ENCODE measurements at regions of chr7 and their contacts with region 1.

Region 1: GRCh38 chr7:128398016-128398840 is 11.6 kb downstream of the IMPDH1 start:
- DNase-seq: peak in 2 of 5 donors; percentile 14 to 32
- H3K4me3 ChIP-seq: no peak overlapping the region
- H3K4me3 Mint-ChIP-seq: no peak overlapping the region
- H3K27ac ChIP-seq: no peak overlapping the region
- H3K27ac Mint-ChIP-seq: no peak overlapping the region
- H3K4me1 ChIP-seq: no peaks in the 10 kb centered on the region
- H3K4me1 Mint-ChIP-seq: peaks cover 3 to 10% (median 5%) of the 10 kb centered on the region in 4 donors
- H3K27me3 ChIP-seq: no peaks in the 10 kb centered on the region
- H3K27me3 Mint-ChIP-seq: no peaks in the 10 kb centered on the region

Region 2: DNA sequence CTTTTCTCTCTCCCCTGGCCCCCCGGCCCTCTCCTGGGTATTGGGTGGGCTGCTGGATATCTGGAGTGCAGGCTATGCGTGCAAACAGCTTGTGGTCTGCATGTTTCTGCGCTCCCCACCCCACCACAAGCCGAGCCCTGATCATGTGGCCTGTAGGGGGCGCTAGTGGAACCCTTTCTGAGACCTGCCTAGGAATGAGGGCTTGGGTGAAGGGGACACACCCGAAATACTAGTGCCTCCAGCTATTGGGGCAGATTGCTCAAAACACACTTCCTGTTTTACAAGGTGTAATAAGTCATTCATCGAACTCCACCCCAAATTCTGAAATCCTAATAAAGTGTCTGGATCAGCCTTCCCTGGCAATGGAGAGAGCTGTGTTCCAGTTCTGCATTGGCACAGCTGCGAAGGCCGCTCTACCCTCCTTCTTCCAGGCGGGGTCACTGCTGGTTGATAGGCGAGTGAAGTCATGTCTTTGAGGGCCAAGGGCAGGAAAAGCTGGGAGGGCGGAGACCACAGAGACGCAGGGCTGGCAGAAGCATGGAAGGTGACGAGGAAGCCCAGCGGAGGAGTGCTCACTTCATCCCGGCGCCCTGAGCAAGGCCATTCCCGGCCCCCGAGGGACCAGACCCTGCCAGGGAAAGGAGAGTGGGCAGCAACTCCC is 16.9 kb before region 1 on chr7:
- CTCF ChIA-PET with region 1: interaction called, 21 read pairs
- POLR2A ChIA-PET with region 1: no interaction called
- intact Hi-C with region 1: no loop called
- DNase-seq: no peak
- H3K4me3 ChIP-seq: no peak overlapping the region
- H3K4me3 Mint-ChIP-seq: no peak overlapping the region
- H3K27ac ChIP-seq: no peak overlapping the region
- H3K27ac Mint-ChIP-seq: no peak overlapping the region
- H3K4me1 ChIP-seq: no peaks in the 10 kb centered on the region
- H3K4me1 Mint-ChIP-seq: peaks cover 0 to 2% (median 0%) of the 10 kb centered on the region in 4 donors
- H3K27me3 ChIP-seq: no peaks in the 10 kb centered on the region
- H3K27me3 Mint-ChIP-seq: peaks cover 1 to 2% of the 10 kb centered on the region in 2 donors

Region 3: DNA sequence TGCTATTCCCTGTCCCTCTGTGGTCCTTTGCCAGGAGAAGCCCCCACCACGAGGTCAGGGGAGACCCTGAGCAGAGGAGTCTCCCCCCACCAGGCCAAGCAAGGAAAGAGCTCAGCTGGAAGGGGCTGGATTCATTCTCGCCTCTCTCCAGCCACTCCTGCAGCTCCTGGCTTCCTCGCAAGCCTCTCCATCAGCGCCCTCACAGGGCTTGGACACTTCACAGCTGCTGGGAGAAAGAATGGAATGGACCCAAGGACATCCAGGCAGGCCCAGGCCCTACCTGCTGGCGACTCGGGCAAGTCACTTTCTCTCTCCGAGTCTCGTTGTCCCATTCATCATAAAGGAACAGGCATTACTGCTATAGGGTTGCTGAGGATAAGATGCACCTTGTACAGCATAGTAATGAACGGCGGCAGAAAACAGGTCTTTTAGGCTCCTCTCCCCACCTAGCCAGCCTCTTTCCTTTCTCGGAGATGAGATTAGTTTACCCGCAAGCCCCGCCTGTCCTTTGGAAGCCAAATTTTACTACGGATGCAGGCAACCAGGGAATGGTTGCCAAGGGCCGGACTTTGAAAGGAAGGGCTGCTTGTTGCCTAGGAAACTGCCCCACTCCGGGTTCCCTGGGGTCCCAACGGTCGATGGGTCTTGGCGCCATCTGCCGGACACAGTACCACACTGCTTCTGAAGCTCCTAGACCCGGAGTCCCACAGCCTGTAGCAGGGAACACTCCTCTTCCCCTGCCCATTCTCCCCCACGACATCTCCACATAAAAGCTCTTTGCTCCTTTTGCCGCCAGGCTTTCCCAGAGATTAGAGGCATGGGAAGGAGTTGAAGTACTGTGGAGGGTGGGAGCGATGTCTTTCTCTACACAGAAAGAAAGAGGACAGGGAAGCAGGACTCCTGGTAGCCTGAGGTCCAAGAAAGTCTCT is 10.7 kb before region 1 on chr7:
- CTCF ChIA-PET with region 1: interaction called, 21 read pairs
- POLR2A ChIA-PET with region 1: no interaction called
- intact Hi-C with region 1: no loop called
- DNase-seq: peak in 4 of 5 donors; percentile 48 to 56 (median 51)
- H3K4me3 ChIP-seq: no peak overlapping the region
- H3K4me3 Mint-ChIP-seq: no peak overlapping the region
- H3K27ac ChIP-seq: no peak overlapping the region
- H3K27ac Mint-ChIP-seq: no peak overlapping the region
- H3K4me1 ChIP-seq: no peaks in the 10 kb centered on the region
- H3K4me1 Mint-ChIP-seq: peaks cover 0 to 4% (median under 1%) of the 10 kb centered on the region in 4 donors
- H3K27me3 ChIP-seq: no peaks in the 10 kb centered on the region
- H3K27me3 Mint-ChIP-seq: no peaks in the 10 kb centered on the region

Region 4: GRCh38 chr7:128409596-128410160 is 11.4 kb after region 1 on chr7 and contains the start of gene IMPDH1:
- CTCF ChIA-PET with region 1: interaction called, 80 read pairs
- POLR2A ChIA-PET with region 1: interaction called, 4 read pairs
- intact Hi-C with region 1: no loop called
- DNase-seq: peak; percentile 83 to 91 (median 85)
- H3K4me3 ChIP-seq: peak within 1 kb of the TSS; percentile 68 to 92
- H3K4me3 Mint-ChIP-seq: peak within 1 kb of the TSS; percentile 90 to 96 (median 92)
- H3K27ac ChIP-seq: peak within 1 kb of the TSS; percentile 85
- H3K27ac Mint-ChIP-seq: peak within 1 kb of the TSS; percentile 86 to 95 (median 94)
- H3K4me1 ChIP-seq: peaks cover 45% of the 10 kb centered on the region
- H3K4me1 Mint-ChIP-seq: peaks cover 22 to 43% (median 32%) of the 10 kb centered on the region in 4 donors
- H3K27me3 ChIP-seq: no peaks in the 10 kb centered on the region
- H3K27me3 Mint-ChIP-seq: no peaks in the 10 kb centered on the region
- total RNA-seq, gene IMPDH1: 48.0 to 49.4 TPM

Region 5: DNA sequence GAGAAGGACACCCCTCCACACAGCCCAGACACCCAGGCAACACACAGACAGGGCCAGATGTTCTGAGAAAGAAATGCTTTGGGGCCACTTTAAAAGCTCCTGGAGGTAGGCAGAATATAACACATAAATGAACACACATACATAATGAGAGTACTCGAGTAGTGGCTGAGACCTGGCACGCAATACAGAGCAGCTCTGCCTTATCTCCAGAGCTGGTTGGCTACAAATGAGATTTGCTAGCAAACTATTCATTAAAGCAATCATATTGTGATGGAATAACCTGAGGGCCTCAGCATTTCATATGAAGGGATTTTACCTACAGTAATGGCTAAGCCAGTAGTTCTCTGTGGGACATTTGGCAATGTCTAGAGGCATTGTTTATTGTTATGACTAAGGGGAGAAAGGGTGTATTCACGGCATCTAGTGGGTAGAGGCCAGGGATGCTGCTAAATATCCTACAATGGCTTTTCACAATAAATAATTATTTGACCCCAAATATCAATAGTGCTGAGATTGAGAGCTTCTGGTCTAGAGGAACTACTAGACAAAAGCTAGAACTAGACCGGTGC is 17.1 kb after region 1 on chr7:
- CTCF ChIA-PET with region 1: interaction called, 80 read pairs
- POLR2A ChIA-PET with region 1: interaction called, 3 read pairs
- intact Hi-C with region 1: no loop called
- DNase-seq: no peak
- H3K4me3 ChIP-seq: no peak overlapping the region
- H3K4me3 Mint-ChIP-seq: no peak overlapping the region
- H3K27ac ChIP-seq: no peak overlapping the region
- H3K27ac Mint-ChIP-seq: no peak overlapping the region
- H3K4me1 ChIP-seq: peaks cover 3% of the 10 kb centered on the region
- H3K4me1 Mint-ChIP-seq: peaks cover 2 to 3% (median 3%) of the 10 kb centered on the region in 4 donors
- H3K27me3 ChIP-seq: no peaks in the 10 kb centered on the region
- H3K27me3 Mint-ChIP-seq: peaks cover 0 to 3% of the 10 kb centered on the region in 2 donors

Region 6: DNA sequence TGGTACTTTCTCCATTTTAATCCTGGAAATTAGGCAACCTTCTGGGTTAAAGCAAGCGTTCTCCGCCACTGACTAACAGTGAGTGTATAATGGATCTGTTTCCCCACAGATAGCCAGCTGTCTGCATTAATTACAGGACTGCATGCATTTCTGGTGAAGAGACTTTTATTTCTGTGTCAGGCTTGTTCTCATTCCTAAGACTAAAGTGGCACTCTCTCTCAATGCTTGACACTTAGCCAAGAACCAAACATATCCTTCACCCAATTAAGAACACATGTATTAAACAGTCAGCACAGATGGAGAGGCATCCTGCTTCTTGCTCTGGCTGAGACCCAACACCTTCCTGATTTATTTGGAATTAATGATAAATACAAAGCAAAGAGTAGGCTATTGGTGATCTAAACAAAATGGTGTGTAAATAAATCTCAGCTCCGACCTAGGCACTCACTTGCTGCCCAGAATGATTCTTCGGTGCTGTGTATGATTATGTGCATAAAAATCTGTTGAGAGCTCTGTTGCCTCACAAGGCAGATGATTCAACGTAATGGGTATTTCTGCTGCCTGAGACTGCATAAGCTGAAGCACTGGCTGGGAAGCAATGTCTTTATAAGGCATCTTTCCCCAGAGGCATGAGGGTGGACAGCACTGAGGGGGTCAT is 357.7 kb after region 1 on chr7:
- CTCF ChIA-PET with region 1: no interaction called
- POLR2A ChIA-PET with region 1: no interaction called
- intact Hi-C with region 1: no loop called
- DNase-seq: no peak
- H3K4me3 ChIP-seq: no peak overlapping the region
- H3K4me3 Mint-ChIP-seq: no peak overlapping the region
- H3K27ac ChIP-seq: no peak overlapping the region
- H3K27ac Mint-ChIP-seq: no peak overlapping the region
- H3K4me1 ChIP-seq: no peaks in the 10 kb centered on the region
- H3K4me1 Mint-ChIP-seq: peaks cover 0 to 4% (median 0%) of the 10 kb centered on the region in 4 donors
- H3K27me3 ChIP-seq: no peaks in the 10 kb centered on the region
- H3K27me3 Mint-ChIP-seq: no peaks in the 10 kb centered on the region

Measured in CD4-positive, alpha-beta memory T cell (primary cell).